Naive thymus-derived CD4-positive, alpha-beta T cell (primary cell): ENCODE measurements at regions of chr14 and their contacts with region 1.

Region 1: DNA sequence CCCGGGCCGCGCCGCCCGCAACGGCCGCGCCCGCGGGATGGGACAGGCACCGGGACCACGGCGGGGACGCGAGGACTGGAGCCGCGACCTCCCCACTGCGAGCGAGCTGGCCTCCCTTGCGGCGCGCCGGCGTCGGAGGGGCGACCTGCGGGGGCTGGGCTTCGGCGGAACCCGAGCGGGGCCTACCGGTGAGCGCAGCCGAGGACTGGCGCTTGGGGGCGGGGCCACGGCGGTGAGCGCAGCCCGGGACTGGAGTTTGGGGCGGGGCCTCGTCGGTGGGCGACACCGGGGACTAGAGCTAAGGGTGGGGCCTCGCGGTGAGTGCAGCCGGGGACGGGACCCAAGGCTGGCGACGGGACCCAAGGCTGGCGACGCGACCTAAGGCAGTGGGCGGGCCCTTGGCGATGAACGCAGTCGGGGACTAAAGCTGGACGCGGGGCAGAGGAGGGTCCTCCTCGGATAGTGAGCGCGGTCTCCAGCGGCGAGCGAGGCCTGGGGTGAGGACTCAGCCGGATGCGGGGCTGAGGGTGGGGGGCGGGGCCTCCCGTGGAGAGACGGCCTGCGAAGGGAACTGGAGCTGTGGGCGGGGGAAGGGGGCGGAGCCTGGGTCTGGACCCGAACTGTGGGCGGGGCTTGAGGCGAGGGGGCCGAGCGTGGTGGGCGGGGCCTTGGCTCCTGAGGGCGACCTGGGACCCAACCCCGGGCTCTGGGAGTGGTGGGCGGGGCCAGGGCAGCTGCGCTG is at the start of gene BRF1:
- DNase-seq: peak; percentile 94 to 100 (median 99)
- ATAC-seq: peak; percentile 93
- H3K4me3 ChIP-seq: peak within 1 kb of the TSS; percentile 73
- H3K4me3 Mint-ChIP-seq: peak within 1 kb of the TSS; percentile 75 to 95 (median 90)
- H3K27ac ChIP-seq: peak within 1 kb of the TSS; percentile 94
- H3K27ac Mint-ChIP-seq: peak within 1 kb of the TSS; percentile 86 to 97 (median 94)
- H3K4me1 ChIP-seq: peaks cover 0 to 22% of the 10 kb centered on the region in 2 donors
- H3K4me1 Mint-ChIP-seq: peaks cover 34 to 52% (median 40%) of the 10 kb centered on the region in 7 donors
- H3K27me3 ChIP-seq: no peaks in the 10 kb centered on the region
- H3K27me3 Mint-ChIP-seq: no peaks in the 10 kb centered on the region
- total RNA-seq, gene BRF1: 49.8 to 75.7 (median 61.4) TPM

Region 2: GRCh38 chr14:104554608-104555429 is 746.1 kb before region 1 on chr14:
- CTCF ChIA-PET with region 1: no interaction called
- POLR2A ChIA-PET with region 1: no interaction called
- intact Hi-C with region 1: no loop called
- DNase-seq: no peak
- ATAC-seq: no peak
- H3K4me3 ChIP-seq: no peak overlapping the region
- H3K4me3 Mint-ChIP-seq: no peak overlapping the region
- H3K27ac ChIP-seq: no peak overlapping the region
- H3K27ac Mint-ChIP-seq: no peak overlapping the region
- H3K4me1 ChIP-seq: no peaks in the 10 kb centered on the region
- H3K4me1 Mint-ChIP-seq: no peaks in the 10 kb centered on the region
- H3K27me3 ChIP-seq: no peaks in the 10 kb centered on the region
- H3K27me3 Mint-ChIP-seq: peaks cover 0 to 12% (median 6%) of the 10 kb centered on the region in 5 donors

Region 3: DNA sequence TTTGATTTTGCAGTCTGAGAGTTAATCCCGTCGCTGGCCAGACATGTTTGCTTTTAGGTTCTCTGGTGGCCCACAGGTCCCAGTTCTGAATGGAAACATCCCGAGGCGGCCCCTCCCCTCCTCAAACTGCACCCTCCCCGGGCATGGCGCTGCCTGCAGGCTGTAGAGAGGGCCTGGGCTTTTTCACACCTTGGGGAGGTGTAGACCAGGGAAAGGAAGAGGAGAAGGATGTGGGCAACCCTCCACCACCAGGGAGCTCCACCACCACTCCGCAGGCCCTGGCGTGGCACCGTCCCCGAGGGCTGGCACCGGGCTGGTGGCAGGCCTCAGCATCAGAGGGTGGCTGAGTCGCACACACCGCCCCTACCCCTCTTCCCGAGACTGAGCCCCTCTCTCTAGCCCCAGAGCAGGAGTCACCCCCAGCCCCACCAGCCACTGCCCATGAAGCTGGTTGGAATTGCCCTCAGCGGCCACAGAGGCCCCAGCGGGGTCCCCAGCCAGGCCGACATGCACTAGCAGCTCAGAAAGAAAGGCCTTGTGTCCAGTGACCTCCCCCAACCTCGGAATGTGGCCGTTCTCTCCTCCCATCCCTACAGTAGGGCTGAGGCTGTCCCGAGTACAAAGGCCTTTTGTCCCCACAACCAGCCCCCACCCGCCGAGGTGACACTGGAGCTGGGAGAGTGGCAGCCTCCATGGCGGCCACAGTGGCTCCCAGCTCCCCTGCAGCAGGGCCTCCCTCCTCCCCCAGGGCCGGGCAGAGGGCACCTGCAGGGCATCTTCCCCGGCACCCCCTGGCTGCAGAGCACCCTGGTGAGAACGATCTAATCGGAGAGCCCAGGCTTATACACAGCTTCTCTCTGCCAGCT is 635.1 kb before region 1 on chr14:
- CTCF ChIA-PET with region 1: no interaction called
- POLR2A ChIA-PET with region 1: no interaction called
- intact Hi-C with region 1: no loop called
- DNase-seq: peak in 7 of 9 donors; percentile 33 to 65 (median 55)
- ATAC-seq: peak; percentile 90
- H3K4me3 ChIP-seq: no peak overlapping the region
- H3K4me3 Mint-ChIP-seq: peak overlapping the region in 9 of 10 donors; percentile 7 to 80 (median 39)
- H3K27ac ChIP-seq: peak overlapping the region; percentile 17
- H3K27ac Mint-ChIP-seq: peak overlapping the region in 8 of 9 donors; percentile 60 to 90 (median 78)
- H3K4me1 ChIP-seq: peaks cover 12 to 14% of the 10 kb centered on the region in 2 donors
- H3K4me1 Mint-ChIP-seq: peaks cover 13 to 32% (median 24%) of the 10 kb centered on the region in 7 donors
- H3K27me3 ChIP-seq: peaks cover 0 to 5% of the 10 kb centered on the region in 2 donors
- H3K27me3 Mint-ChIP-seq: peaks cover 0 to 25% (median 8%) of the 10 kb centered on the region in 5 donors

Region 4: DNA sequence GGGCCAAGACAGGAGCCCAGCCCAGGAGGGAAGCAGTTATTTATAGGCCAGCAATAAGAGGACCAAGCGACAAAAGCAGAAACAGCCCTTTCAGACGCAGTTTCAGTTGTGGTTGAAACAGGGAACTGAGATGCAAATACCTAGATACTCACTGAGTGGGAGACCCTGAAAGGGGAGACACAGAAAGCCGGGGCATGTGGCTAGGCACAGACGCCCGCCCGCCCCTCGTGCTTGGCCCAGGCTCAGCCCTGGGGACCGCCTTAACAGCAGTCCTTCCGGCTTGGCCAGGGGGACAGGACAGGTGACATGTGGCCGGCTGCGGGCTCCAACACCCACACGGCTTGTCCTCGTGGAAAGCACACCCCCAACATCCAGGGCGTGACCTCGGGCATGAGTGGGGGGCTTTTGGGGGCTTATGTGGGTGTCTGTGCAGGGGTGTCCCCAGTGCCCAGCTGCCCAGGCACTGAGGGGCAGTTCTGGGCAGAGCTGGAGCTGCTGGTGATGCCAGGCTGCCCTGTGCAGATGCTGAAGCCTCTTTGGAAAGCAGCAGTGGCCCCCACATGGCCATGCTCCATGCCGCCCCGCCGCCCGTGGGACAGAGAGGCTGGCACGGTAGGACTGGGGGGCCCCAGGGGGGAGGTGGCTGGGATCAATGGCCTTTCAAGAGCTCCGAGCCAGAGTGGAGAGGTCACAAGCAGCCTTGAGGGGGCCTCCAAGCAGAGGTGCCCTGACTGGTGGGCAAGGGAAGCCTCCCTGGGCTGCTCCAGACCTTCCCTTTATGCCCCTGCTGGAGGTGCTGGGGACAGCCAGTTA is 374.1 kb before region 1 on chr14:
- CTCF ChIA-PET with region 1: no interaction called
- POLR2A ChIA-PET with region 1: no interaction called
- intact Hi-C with region 1: no loop called
- DNase-seq: no peak
- ATAC-seq: peak; percentile 51
- H3K4me3 ChIP-seq: no peak overlapping the region
- H3K4me3 Mint-ChIP-seq: no peak overlapping the region
- H3K27ac ChIP-seq: no peak overlapping the region
- H3K27ac Mint-ChIP-seq: no peak overlapping the region
- H3K4me1 ChIP-seq: no peaks in the 10 kb centered on the region
- H3K4me1 Mint-ChIP-seq: peaks cover 0 to 2% (median 0%) of the 10 kb centered on the region in 7 donors
- H3K27me3 ChIP-seq: no peaks in the 10 kb centered on the region
- H3K27me3 Mint-ChIP-seq: peaks cover 0 to 4% (median 0%) of the 10 kb centered on the region in 5 donors

Region 5: GRCh38 chr14:104985675-104986525 is 315.1 kb before region 1 on chr14 and contains the start of gene CLBA1:
- CTCF ChIA-PET with region 1: no interaction called
- POLR2A ChIA-PET with region 1: no interaction called
- intact Hi-C with region 1: loop called in 1 of 2 experiments (anchors 5 kb)
- DNase-seq: peak; percentile 81 to 90 (median 89)
- ATAC-seq: peak; percentile 96
- H3K4me3 ChIP-seq: peak within 1 kb of the TSS; percentile 56
- H3K4me3 Mint-ChIP-seq: peak within 1 kb of the TSS; percentile 64 to 86 (median 76)
- H3K27ac ChIP-seq: peak within 1 kb of the TSS; percentile 72
- H3K27ac Mint-ChIP-seq: peak within 1 kb of the TSS in 8 of 9 donors; percentile 74 to 89 (median 86)
- H3K4me1 ChIP-seq: no peaks in the 10 kb centered on the region
- H3K4me1 Mint-ChIP-seq: peaks cover 0 to 9% (median 4%) of the 10 kb centered on the region in 7 donors
- H3K27me3 ChIP-seq: no peaks in the 10 kb centered on the region
- H3K27me3 Mint-ChIP-seq: peaks cover 0 to 5% (median 4%) of the 10 kb centered on the region in 5 donors
- total RNA-seq, gene CLBA1: 0.51 to 2.1 (median 1.3) TPM

Region 6: GRCh38 chr14:105086833-105087307 is 214.1 kb before region 1 on chr14:
- CTCF ChIA-PET with region 1: no interaction called
- POLR2A ChIA-PET with region 1: interaction called, 3 read pairs
- intact Hi-C with region 1: loop called (anchors 2 to 5 kb)
- DNase-seq: peak; percentile 74 to 88 (median 84)
- ATAC-seq: peak; percentile 92
- H3K4me3 ChIP-seq: peak overlapping the region; percentile 63
- H3K4me3 Mint-ChIP-seq: peak overlapping the region; percentile 64 to 83 (median 78)
- H3K27ac ChIP-seq: peak overlapping the region; percentile 55
- H3K27ac Mint-ChIP-seq: peak overlapping the region in 8 of 9 donors; percentile 3 to 84 (median 55)
- H3K4me1 ChIP-seq: peaks cover 4 to 7% of the 10 kb centered on the region in 2 donors
- H3K4me1 Mint-ChIP-seq: peaks cover 8 to 22% (median 13%) of the 10 kb centered on the region in 7 donors
- H3K27me3 ChIP-seq: no peaks in the 10 kb centered on the region
- H3K27me3 Mint-ChIP-seq: peaks cover 0 to 27% (median 0%) of the 10 kb centered on the region in 5 donors

Region 7: GRCh38 chr14:105203057-105203531 is 97.9 kb before region 1 on chr14:
- CTCF ChIA-PET with region 1: no interaction called
- POLR2A ChIA-PET with region 1: interaction called, 3 read pairs
- intact Hi-C with region 1: loop called in 1 of 2 experiments (anchors 1 kb)
- DNase-seq: peak in 6 of 9 donors; percentile 30 to 75 (median 58)
- ATAC-seq: peak; percentile 58
- H3K4me3 ChIP-seq: no peak overlapping the region
- H3K4me3 Mint-ChIP-seq: no peak overlapping the region
- H3K27ac ChIP-seq: no peak overlapping the region
- H3K27ac Mint-ChIP-seq: no peak overlapping the region
- H3K4me1 ChIP-seq: peaks cover 0 to 18% of the 10 kb centered on the region in 2 donors
- H3K4me1 Mint-ChIP-seq: peaks cover 9 to 15% (median 13%) of the 10 kb centered on the region in 7 donors
- H3K27me3 ChIP-seq: peaks cover 0 to 2% of the 10 kb centered on the region in 2 donors
- H3K27me3 Mint-ChIP-seq: peaks cover 6 to 26% (median 12%) of the 10 kb centered on the region in 5 donors

Region 8: DNA sequence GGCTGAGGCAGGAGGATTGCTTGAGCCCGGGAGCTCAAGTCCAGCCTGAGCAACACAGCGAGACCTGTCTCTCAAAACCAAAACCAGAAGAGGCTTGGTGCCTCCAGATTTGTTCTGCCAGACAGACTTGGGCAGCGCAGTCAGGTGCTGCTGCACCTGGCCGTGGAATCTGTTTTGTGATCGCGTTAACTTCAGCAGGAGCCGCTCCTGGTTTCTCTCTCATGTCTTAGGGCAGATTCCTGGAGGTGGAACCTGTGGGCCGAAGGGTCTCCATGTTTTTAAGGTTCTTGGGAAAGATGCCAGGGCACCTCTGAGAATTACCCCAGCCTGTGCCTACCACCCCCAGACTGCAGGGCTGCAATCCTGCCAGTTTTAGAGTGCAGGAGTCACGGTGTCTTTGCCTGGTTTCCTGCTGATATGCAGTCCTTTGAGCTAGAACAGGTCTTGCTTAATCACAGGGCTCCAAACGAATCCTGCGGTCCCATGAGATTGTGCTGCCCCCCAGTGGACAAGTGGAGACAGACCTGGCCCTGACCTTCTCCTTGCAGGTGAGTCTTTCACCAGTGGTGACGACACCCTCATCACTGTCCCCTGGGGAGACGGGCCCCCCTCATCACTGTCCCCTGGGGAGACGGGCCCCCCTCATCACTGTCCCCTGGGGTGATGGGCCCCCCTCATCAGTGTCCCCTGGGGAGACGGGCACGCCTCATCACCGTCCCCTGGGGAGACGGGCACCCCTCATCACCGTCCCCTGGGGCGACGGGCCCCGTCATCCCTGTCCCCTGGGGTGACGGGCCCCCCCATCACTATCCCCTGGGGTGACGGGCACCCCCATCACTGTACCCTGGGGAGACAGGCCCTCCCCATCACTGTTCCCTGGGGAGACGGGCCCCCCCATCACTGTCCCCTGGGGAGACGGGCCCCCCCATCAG is 51.2 kb after region 1 on chr14:
- CTCF ChIA-PET with region 1: interaction called, 3 read pairs
- POLR2A ChIA-PET with region 1: no interaction called
- intact Hi-C with region 1: loop called in 1 of 2 experiments (anchors 5 kb)
- DNase-seq: peak; percentile 71 to 90 (median 87)
- ATAC-seq: peak; percentile 97
- H3K4me3 ChIP-seq: no peak overlapping the region
- H3K4me3 Mint-ChIP-seq: no peak overlapping the region
- H3K27ac ChIP-seq: no peak overlapping the region
- H3K27ac Mint-ChIP-seq: peak overlapping the region in 1 of 9 donors; percentile 56
- H3K4me1 ChIP-seq: peaks cover 0 to 4% of the 10 kb centered on the region in 2 donors
- H3K4me1 Mint-ChIP-seq: peaks cover 4 to 5% (median 4%) of the 10 kb centered on the region in 7 donors
- H3K27me3 ChIP-seq: no peaks in the 10 kb centered on the region
- H3K27me3 Mint-ChIP-seq: no peaks in the 10 kb centered on the region

Region 9: DNA sequence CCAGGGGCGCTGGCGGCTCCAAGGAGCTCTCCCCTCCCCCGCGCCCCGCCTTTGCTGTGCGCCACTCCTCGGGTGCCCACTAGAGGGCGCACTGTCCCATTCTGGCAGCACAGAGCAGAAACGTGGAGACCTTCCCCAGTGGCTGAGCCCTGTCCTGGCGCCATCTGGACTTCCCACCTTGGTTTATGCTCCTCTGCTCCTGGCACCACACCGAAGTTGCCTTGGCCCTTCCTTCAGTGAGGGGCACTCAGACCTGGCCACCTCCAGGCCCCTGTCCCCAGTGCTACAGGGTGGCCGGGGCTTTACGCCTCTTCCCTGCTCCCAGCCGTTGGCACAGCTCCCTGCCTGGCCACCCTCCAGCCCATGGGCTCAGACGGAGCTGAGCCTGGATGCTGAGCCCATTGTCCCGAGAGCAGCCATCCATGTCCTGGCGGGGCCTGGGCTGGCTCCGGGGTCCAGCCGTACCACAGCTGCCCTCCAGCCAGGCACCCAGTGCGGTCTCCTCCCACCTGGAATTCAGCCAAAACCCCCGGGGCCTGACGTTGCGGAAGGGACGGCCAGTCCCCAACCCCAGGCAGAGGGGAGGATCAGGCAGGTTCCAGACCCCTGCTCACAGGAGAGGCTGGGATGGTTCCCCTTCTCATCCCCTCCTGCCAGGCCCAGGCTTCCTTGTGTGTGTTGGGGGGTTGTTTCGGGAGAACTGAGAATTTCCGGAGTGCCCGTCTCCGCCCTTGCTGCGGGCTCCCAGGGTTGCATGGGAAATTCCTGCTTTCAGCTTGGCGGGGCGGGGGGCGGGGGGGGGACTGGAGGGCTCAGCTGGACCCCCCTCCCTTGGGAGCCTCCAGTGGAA is 180.2 kb after region 1 on chr14:
- CTCF ChIA-PET with region 1: interaction called, 3 read pairs
- POLR2A ChIA-PET with region 1: interaction called, 6 read pairs
- intact Hi-C with region 1: loop called in 1 of 2 experiments (anchors 2 kb)
- DNase-seq: peak; percentile 86 to 98 (median 94)
- ATAC-seq: peak; percentile 74
- H3K4me3 ChIP-seq: peak overlapping the region; percentile 82
- H3K4me3 Mint-ChIP-seq: peak overlapping the region; percentile 73 to 92 (median 86)
- H3K27ac ChIP-seq: peak overlapping the region; percentile 100
- H3K27ac Mint-ChIP-seq: peak overlapping the region; percentile 91 to 100 (median 99)
- H3K4me1 ChIP-seq: peaks cover 56 to 78% of the 10 kb centered on the region in 2 donors
- H3K4me1 Mint-ChIP-seq: peaks cover 29 to 72% (median 43%) of the 10 kb centered on the region in 7 donors
- H3K27me3 ChIP-seq: no peaks in the 10 kb centered on the region
- H3K27me3 Mint-ChIP-seq: peaks cover 0 to 35% (median 0%) of the 10 kb centered on the region in 5 donors

Region 10: GRCh38 chr14:106631879-106632278 is 1330.9 kb after region 1 on chr14:
- CTCF ChIA-PET with region 1: no interaction called
- POLR2A ChIA-PET with region 1: no interaction called
- intact Hi-C with region 1: no loop called
- DNase-seq: no peak
- ATAC-seq: no peak
- H3K4me3 ChIP-seq: no peak overlapping the region
- H3K4me3 Mint-ChIP-seq: no peak overlapping the region
- H3K27ac ChIP-seq: no peak overlapping the region
- H3K27ac Mint-ChIP-seq: no peak overlapping the region
- H3K4me1 ChIP-seq: peaks cover 0 to 5% of the 10 kb centered on the region in 2 donors
- H3K4me1 Mint-ChIP-seq: peaks cover 0 to 7% (median 3%) of the 10 kb centered on the region in 7 donors
- H3K27me3 ChIP-seq: no peaks in the 10 kb centered on the region
- H3K27me3 Mint-ChIP-seq: peaks cover 4 to 48% (median 11%) of the 10 kb centered on the region in 5 donors